IMR-90 (cell line): ENCODE measurements at regions of chr1 and their contacts with region 1.

Region 1: DNA sequence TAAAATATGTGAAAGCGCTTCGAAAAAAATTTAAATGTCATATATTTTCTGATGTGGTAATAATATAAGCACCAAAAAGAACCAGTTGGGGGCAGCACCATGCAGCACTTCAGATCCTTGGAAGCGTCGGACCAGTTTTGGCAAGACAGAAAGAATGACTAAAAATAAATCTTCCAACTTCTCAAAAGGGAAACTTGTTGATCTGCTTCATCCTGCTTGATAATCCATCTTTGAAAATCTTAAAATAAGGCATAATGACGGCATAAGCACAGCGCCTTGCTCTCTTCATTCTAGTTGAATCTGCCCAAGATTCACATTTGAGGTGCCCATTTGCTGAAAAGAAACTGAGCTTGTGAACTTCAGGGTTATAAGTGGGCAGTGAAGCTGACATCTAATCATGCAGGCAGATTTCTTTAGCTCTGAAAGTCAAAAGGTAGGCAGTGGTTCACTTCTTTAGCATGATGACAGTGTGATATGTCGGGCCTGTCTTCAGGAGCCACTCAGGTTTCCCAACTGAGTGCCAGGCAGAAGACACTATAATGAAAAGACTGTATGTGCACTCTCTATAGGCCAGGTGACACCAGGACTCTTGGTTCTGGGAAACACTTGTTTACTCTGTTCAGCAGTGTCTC is 19.8 kb upstream of the MUTYH start:
- DNase-seq: peak; percentile 77
- ATAC-seq: peak; percentile 71
- H3K4me3 ChIP-seq: no peak overlapping the region
- H3K27ac ChIP-seq: no peak overlapping the region
- H3K4me1 ChIP-seq: no peaks in the 10 kb centered on the region; the same call in 1 of the 2 replicates
- H3K27me3 ChIP-seq: no peaks in the 10 kb centered on the region
- CTCF ChIP-seq: peak; percentile 80
- POLR2A ChIP-seq: no peak
- RAD21 ChIP-seq: peak; percentile 84

Region 2: DNA sequence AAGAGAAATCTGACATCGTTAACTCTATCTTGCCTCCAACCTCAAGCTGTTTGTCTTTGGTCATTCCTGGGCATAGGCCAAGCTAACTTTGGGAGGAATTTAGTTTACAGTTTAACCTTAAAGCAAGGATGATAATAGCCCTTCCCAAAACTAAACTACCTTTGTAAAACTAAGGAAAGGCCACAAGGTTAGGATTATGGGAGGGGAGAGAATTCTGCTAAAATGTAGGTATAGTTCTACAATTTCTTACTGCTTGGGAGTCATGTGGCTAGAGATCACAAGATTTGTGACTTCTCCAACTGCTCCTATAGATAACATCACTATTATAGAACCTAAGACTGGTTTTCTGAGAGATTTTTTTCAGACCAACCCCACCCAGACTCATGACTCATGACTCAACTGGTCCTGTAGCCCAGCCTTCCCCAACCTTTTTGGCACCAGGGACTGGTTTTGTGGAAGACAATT is 50.9 kb after region 1 on chr1:
- CTCF ChIA-PET with region 1: no interaction called
- POLR2A ChIA-PET with region 1: no interaction called
- dilution Hi-C with region 1: no loop called
- in situ Hi-C with region 1: no loop called
- intact Hi-C with region 1: loop called (anchors 2 kb)
- DNase-seq: no peak
- ATAC-seq: no peak
- H3K4me3 ChIP-seq: no peak overlapping the region
- H3K27ac ChIP-seq: no peak overlapping the region
- H3K4me1 ChIP-seq: no peaks in the 10 kb centered on the region; the same call in 1 of the 2 replicates
- H3K27me3 ChIP-seq: no peaks in the 10 kb centered on the region; the same call in 1 of the 2 replicates
- CTCF ChIP-seq: no peak
- POLR2A ChIP-seq: no peak
- RAD21 ChIP-seq: no peak

Region 3: DNA sequence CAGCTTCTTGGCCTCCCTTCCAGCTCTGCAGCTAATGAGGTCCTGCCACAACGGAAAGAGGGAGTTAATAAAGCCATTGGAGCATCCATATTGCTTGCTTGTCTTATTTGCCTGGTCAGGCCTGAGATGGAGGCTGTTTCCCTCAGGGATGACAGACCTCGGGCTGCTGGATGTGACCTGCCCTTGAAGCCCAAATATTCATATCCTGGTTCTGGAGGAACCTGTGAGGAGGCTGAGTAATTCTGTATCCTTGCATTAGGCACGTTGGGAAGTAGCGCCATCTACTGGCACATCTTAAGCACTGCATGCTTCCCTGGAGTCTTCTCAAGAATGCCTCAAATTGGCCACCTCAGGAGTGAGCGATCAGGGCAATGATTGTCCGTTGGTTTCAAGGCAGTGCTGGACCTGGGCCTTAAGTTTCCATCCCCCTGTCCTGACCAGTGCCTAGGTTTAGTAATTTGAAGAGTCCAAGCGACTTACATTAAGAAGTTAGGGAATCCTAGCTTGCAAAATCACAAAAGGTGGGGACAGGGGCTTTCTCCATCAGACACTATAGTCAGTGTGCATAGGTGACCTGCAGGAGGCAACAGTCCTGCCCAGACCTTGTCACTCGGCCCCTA is 210.1 kb after region 1 on chr1:
- CTCF ChIA-PET with region 1: interaction called, 4 read pairs
- POLR2A ChIA-PET with region 1: no interaction called
- dilution Hi-C with region 1: no loop called
- in situ Hi-C with region 1: loop called (anchors 5 kb)
- intact Hi-C with region 1: loop called (anchors 1 kb)
- DNase-seq: peak; percentile 78
- ATAC-seq: peak; percentile 98
- H3K4me3 ChIP-seq: no peak overlapping the region
- H3K27ac ChIP-seq: no peak overlapping the region
- H3K4me1 ChIP-seq: no peaks in the 10 kb centered on the region
- H3K27me3 ChIP-seq: no peaks in the 10 kb centered on the region
- CTCF ChIP-seq: peak; percentile 97
- POLR2A ChIP-seq: peak; percentile 42; the same call in 1 of the 2 replicates
- RAD21 ChIP-seq: peak; percentile 96